ENCODE measurements at regions of chr2 and their contacts with region 1.

Region 1: DNA sequence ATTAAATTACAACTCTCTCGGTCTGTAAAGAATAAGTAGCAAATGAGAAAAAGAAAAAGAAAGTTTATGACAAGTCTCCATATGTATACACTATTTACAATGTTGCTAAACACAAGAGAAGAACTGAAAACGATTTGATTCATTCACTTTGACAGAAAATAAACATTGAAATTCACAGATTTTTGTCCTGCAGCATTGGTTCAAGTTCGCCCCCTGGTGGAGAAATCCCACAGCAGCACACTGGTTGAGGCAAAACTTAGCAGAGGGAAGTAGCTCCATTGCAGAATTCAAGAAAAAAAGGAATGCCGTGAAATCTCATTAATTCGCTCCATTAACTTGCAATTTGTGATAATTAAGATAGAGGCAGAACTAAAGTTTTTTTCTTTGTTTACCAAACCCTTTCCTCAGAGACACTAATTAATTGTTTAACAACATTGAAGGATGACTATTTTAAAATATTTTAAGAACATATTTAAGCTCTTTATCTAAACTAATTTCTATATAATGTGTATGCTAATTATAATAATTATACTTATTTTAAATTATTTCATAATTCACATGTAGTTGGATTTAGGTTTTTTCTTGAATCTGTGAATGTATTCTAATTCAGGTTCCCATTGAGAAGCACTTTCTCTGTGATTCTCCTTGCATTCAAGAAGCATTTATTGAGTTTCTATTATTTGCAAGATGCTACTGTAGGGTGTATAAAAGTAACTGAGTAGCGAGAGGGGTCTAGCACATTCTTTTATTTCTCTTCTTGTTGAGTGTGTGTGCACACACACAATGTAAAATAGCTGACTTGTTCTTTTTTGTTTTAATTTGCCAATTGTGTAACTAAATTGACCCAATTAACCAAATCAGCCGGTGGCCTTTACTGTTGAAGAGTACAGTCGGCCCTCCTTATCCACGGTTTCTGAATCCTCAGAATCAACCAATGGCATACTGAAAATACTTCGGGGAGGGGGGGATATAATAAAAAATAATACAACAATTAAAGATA is 74.1 kb downstream of the COL4A3 start:
- DNase-seq: peak; percentile 40 to 71
- ATAC-seq: peak in 1 of 2 experiments; percentile 83; a peak in 3 of 6 replicates
- H3K4me3 ChIP-seq: no peak overlapping the region
- H3K27ac ChIP-seq: no peak overlapping the region
- H3K4me1 ChIP-seq: peaks cover 14% of the 10 kb centered on the region; the same call in 2 of the 3 replicates
- CTCF ChIP-seq: peak; percentile 97
- EP300 ChIP-seq: no peak
- POLR2A ChIP-seq: no peak
- RAD21 ChIP-seq: peak; percentile 95 to 97

Region 2: DNA sequence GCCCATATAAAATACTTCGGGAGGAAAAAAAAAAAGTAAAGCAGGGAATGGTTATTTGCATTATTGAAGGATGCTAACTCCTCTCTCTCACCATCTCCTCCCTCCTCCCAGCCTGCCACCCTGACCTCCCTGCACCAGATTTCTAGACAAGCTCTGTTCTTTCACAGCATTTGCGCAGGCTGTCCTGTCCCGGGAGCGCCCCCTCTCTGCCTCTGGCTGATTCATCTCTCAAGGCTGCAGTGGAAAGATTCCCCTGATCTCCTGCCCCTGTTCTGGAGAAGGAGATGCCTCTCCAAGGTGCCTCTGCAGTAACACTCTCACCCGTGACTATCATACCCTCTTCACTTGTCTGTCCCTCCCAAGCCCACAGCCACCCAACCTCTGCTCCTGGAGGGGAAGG is 113.0 kb before region 1 on chr2:
- CTCF ChIA-PET with region 1: interaction called, 159 read pairs
- POLR2A ChIA-PET with region 1: no interaction called
- DNase-seq: peak in 1 of 2 experiments; percentile 31
- ATAC-seq: peak; percentile 64 to 76; a peak in 4 of 6 replicates
- H3K4me3 ChIP-seq: no peak overlapping the region
- H3K27ac ChIP-seq: no peak overlapping the region
- H3K4me1 ChIP-seq: peaks cover 6% of the 10 kb centered on the region
- CTCF ChIP-seq: no peak
- EP300 ChIP-seq: no peak
- POLR2A ChIP-seq: no peak
- RAD21 ChIP-seq: peak in 1 of 2 experiments; percentile 14; a peak in 1 of 5 replicates

Region 3: GRCh38 chr2:227141301-227141700 is 97.2 kb before region 1 on chr2:
- CTCF ChIA-PET with region 1: interaction called, 159 read pairs
- POLR2A ChIA-PET with region 1: no interaction called
- DNase-seq: no peak
- ATAC-seq: no peak
- H3K4me3 ChIP-seq: no peak overlapping the region
- H3K27ac ChIP-seq: no peak overlapping the region
- H3K4me1 ChIP-seq: no peaks in the 10 kb centered on the region
- CTCF ChIP-seq: no peak
- EP300 ChIP-seq: no peak
- POLR2A ChIP-seq: no peak
- RAD21 ChIP-seq: no peak

Region 4: GRCh38 chr2:227147023-227147422 is 91.5 kb before region 1 on chr2:
- CTCF ChIA-PET with region 1: interaction called, 26 read pairs
- POLR2A ChIA-PET with region 1: no interaction called
- DNase-seq: no peak
- ATAC-seq: no peak
- H3K4me3 ChIP-seq: no peak overlapping the region
- H3K27ac ChIP-seq: no peak overlapping the region
- H3K4me1 ChIP-seq: no peaks in the 10 kb centered on the region
- CTCF ChIP-seq: no peak
- EP300 ChIP-seq: no peak
- POLR2A ChIP-seq: no peak
- RAD21 ChIP-seq: no peak

Region 5: DNA sequence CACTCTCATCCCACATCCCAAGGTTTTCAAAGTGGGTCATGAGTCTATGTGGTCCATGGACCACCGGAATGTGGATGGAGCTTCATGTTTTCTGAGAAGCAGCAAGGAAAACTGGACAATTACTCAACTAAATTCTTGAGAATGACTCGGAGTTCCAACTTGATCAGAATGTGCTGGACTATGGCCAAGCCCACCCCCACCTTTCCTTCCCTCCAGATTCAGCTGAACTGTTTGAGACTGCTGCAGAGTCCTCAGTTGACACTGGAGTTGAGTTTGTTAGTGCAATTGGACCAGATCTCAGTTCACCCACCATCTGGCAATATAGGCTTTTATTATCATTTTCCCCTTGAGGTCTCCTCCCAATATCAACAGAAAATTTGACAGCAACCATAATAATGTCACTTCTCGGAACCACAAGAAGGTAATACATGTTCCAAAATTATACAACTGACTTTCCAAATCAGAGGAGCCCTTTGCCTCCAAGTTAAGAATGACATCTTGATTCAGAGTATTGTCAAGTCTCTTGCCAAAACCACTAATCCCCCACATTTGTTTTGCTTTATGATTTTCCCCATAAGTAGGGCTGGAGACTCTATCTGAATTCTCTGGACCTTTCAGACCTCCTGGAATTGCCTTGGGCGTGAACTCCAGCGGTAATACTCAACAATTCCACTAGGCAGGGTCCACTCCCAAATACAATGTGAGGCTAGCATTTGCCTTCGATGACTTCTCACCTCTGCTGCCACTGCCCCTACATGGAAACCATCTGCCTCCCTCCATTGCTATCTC is 83.4 kb before region 1 on chr2:
- CTCF ChIA-PET with region 1: interaction called, 11 read pairs
- POLR2A ChIA-PET with region 1: no interaction called
- DNase-seq: peak in 1 of 2 experiments; percentile 44
- ATAC-seq: peak in 1 of 2 experiments; percentile 24; a peak in 2 of 6 replicates
- H3K4me3 ChIP-seq: no peak overlapping the region
- H3K27ac ChIP-seq: peak overlapping the region; percentile 23 to 62; a peak in 3 of 6 replicates
- H3K4me1 ChIP-seq: peaks cover 36% of the 10 kb centered on the region
- CTCF ChIP-seq: no peak
- EP300 ChIP-seq: no peak
- POLR2A ChIP-seq: no peak
- RAD21 ChIP-seq: no peak

Region 6: GRCh38 chr2:227228061-227228667 is 10.4 kb before region 1 on chr2:
- CTCF ChIA-PET with region 1: interaction called, 33 read pairs
- POLR2A ChIA-PET with region 1: no interaction called
- DNase-seq: peak; percentile 7 to 71
- ATAC-seq: peak; percentile 86 to 92
- H3K4me3 ChIP-seq: peak overlapping the region; percentile 13; the same call in 2 of the 3 replicates
- H3K27ac ChIP-seq: peak overlapping the region; percentile 43 to 60
- H3K4me1 ChIP-seq: peaks cover 46% of the 10 kb centered on the region
- CTCF ChIP-seq: no peak
- EP300 ChIP-seq: no peak
- POLR2A ChIP-seq: no peak
- RAD21 ChIP-seq: no peak; a peak in 2 of 5 replicates

Region 7: GRCh38 chr2:227248876-227249275 is 10.3 kb after region 1 on chr2:
- CTCF ChIA-PET with region 1: interaction called, 31 read pairs
- POLR2A ChIA-PET with region 1: no interaction called
- DNase-seq: no peak
- ATAC-seq: no peak
- H3K4me3 ChIP-seq: no peak overlapping the region
- H3K27ac ChIP-seq: no peak overlapping the region
- H3K4me1 ChIP-seq: no peaks in the 10 kb centered on the region
- CTCF ChIP-seq: no peak
- EP300 ChIP-seq: no peak
- POLR2A ChIP-seq: no peak
- RAD21 ChIP-seq: no peak

Region 8: GRCh38 chr2:227515742-227516141 is 277.2 kb after region 1 on chr2:
- CTCF ChIA-PET with region 1: no interaction called
- POLR2A ChIA-PET with region 1: no interaction called
- DNase-seq: no peak
- ATAC-seq: no peak
- H3K4me3 ChIP-seq: no peak overlapping the region
- H3K27ac ChIP-seq: no peak overlapping the region
- H3K4me1 ChIP-seq: peaks cover 98% of the 10 kb centered on the region
- CTCF ChIP-seq: no peak
- EP300 ChIP-seq: no peak
- POLR2A ChIP-seq: no peak
- RAD21 ChIP-seq: no peak